ENCODE measurements at regions of chr1 and their contacts with region 1.

Region 1: DNA sequence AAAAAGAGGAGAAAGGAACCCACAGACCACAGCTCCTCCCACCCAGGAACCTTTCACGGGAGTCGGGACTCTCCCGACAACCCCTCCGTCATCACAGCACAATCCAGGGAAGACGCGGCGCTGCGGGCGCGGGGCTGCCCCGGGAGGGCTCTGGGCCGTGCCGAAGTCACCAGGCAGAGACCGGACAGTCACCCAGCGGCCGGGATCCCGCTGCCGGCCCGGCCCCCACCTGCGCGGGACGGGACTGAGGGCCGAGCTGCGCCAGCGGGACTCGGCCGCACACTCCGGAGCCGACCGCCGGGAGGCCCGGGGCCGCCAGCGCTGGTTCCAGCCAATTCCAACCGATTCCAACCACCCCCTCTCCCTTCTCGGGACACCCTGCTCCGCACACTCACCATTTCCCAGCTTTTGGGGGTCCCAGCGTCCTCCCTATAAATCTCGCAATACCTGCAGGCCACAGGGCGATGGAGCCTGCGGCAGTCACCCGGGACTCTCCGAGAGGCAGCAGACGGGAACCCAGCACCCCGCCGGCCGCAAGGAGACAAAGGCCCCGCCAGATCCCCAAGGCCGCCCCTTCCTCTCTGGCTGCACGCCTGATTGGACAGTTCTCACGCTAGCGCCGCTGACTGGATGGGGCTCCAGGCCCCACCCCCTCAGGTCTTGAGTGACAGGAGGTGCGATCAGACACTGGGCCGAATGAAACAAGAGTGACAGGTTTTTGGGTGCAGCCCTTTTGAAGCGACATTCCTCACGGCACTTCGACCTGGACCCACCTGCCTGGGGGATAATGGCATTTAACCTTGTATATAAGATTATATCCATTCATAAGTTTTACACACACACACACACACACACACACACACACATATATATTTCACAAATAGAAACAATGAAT is at the start of gene ZNF695:
- DNase-seq: peak; percentile 100
- H3K4me3 Mint-ChIP-seq: peak within 1 kb of the TSS; percentile 96
- H3K27ac Mint-ChIP-seq: peak within 1 kb of the TSS; percentile 99
- H3K4me1 Mint-ChIP-seq: no peaks in the 10 kb centered on the region
- H3K27me3 Mint-ChIP-seq: no peaks in the 10 kb centered on the region
- CTCF ChIP-seq: no peak
- total RNA-seq, gene ZNF695: 8.7 and 13.8 TPM in 2 replicates

Region 2: DNA sequence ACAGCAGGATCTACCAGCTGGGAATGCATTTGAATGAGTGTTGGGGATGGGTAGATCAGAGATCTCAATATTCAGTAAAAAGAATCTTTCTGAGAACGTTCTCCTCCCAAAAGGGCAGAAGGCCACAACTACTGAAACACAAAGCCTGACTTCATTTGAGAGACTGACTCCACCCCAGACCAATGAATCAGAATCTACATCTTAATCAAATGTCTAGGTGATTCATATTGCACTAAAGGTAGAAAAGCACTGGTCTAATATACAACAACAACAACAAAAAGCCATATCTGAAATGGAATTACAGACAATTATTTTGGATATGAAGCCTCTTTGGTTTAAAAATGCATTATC is 624.5 kb before region 1 on chr1:
- CTCF ChIA-PET with region 1: no interaction called
- POLR2A ChIA-PET with region 1: no interaction called
- intact Hi-C with region 1: no loop called
- DNase-seq: no peak
- H3K4me3 Mint-ChIP-seq: no peak overlapping the region
- H3K27ac Mint-ChIP-seq: no peak overlapping the region
- H3K4me1 Mint-ChIP-seq: peaks cover 9% of the 10 kb centered on the region
- H3K27me3 Mint-ChIP-seq: no peaks in the 10 kb centered on the region
- CTCF ChIP-seq: no peak

Region 3: GRCh38 chr1:247103859-247104591 is 96.3 kb after region 1 on chr1 and contains the start of gene ZNF669:
- CTCF ChIA-PET with region 1: interaction called, 3 read pairs
- POLR2A ChIA-PET with region 1: interaction called, 4 read pairs
- intact Hi-C with region 1: loop called (anchors 2 kb)
- DNase-seq: peak; percentile 99
- H3K4me3 Mint-ChIP-seq: peak within 1 kb of the TSS; percentile 94
- H3K27ac Mint-ChIP-seq: peak within 1 kb of the TSS; percentile 93
- H3K4me1 Mint-ChIP-seq: peaks cover 6% of the 10 kb centered on the region
- H3K27me3 Mint-ChIP-seq: no peaks in the 10 kb centered on the region
- CTCF ChIP-seq: no peak
- total RNA-seq, gene ZNF669: 11.6 and 11.9 TPM in 2 replicates